ENCODE measurements at regions of chr12 and their contacts with region 1.

Region 1: DNA sequence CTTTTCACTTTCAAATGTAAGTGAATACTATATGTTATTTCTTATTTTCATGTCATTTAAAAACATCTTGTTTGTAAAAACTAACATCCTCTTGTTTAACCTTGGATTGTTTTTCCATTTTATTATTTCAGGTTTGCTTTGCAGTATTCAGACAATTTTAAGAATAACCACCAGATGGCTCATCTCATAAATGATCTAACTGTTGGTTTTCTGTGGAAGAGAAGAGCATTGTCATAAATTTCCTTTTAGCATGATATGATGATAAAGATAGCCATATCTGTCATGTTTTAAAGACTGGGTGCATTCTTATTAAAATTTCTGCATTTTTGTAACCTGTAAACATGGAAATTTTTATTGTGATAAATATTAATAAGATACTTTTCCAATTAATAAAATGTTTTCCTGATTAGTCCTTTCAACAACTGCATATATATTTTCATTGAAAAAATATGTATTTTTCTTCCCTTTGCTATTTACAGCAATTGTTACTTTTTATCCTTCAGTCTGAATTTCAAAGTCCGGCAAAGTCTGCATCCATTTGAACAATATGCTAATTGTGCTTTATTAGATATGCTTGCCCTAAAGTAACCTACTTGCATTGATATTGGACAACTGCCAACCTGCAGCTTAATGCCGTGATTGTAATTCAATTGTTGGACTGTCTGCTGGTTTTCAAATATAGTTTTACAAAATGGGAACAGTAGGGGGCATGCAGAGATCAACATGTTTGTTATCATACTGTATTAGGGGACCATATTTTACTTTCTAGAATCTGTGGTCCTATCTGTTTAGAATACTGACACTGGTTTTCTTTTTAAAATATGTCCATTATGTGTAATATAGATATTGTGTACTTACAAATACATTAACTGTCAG is 163.4 kb downstream of the GARIN6 start:
- DNase-seq: peak; percentile 71
- H3K4me3 ChIP-seq: no peak overlapping the region
- H3K27ac ChIP-seq: no peak overlapping the region
- H3K4me1 ChIP-seq: peaks cover 8% of the 10 kb centered on the region
- H3K27me3 ChIP-seq: no peaks in the 10 kb centered on the region
- CTCF ChIP-seq: peak; percentile 53

Region 2: GRCh38 chr12:100229058-100229637 is 418.2 kb after region 1 on chr12:
- CTCF ChIA-PET with region 1: no interaction called
- POLR2A ChIA-PET with region 1: no interaction called
- intact Hi-C with region 1: loop called (anchors 5 kb)
- DNase-seq: peak; percentile 42
- H3K4me3 ChIP-seq: no peak overlapping the region
- H3K27ac ChIP-seq: no peak overlapping the region
- H3K4me1 ChIP-seq: no peaks in the 10 kb centered on the region
- H3K27me3 ChIP-seq: no peaks in the 10 kb centered on the region
- CTCF ChIP-seq: peak; percentile 52

Region 3: GRCh38 chr12:100391856-100392255 is 580.9 kb after region 1 on chr12:
- CTCF ChIA-PET with region 1: no interaction called
- POLR2A ChIA-PET with region 1: no interaction called
- intact Hi-C with region 1: loop called (anchors 10 kb)
- DNase-seq: peak; percentile 23
- H3K4me3 ChIP-seq: no peak overlapping the region
- H3K27ac ChIP-seq: no peak overlapping the region
- H3K4me1 ChIP-seq: no peaks in the 10 kb centered on the region
- H3K27me3 ChIP-seq: no peaks in the 10 kb centered on the region
- CTCF ChIP-seq: peak; percentile 42

Region 4: GRCh38 chr12:100554608-100555077 is 743.7 kb after region 1 on chr12:
- CTCF ChIA-PET with region 1: no interaction called
- POLR2A ChIA-PET with region 1: no interaction called
- intact Hi-C with region 1: loop called (anchors 5 kb)
- DNase-seq: peak; percentile 80
- H3K4me3 ChIP-seq: no peak overlapping the region
- H3K27ac ChIP-seq: no peak overlapping the region
- H3K4me1 ChIP-seq: peaks cover 5% of the 10 kb centered on the region
- H3K27me3 ChIP-seq: no peaks in the 10 kb centered on the region
- CTCF ChIP-seq: peak; percentile 76

Region 5: GRCh38 chr12:100733817-100734593 is 923.0 kb after region 1 on chr12:
- CTCF ChIA-PET with region 1: no interaction called
- POLR2A ChIA-PET with region 1: no interaction called
- intact Hi-C with region 1: loop called (anchors 10 kb)
- DNase-seq: peak; percentile 59
- H3K4me3 ChIP-seq: no peak overlapping the region
- H3K27ac ChIP-seq: no peak overlapping the region
- H3K4me1 ChIP-seq: no peaks in the 10 kb centered on the region
- H3K27me3 ChIP-seq: peaks cover 6% of the 10 kb centered on the region
- CTCF ChIP-seq: peak; percentile 72